ENCODE measurements at regions of chr19 and their contacts with region 1.

Region 1: DNA sequence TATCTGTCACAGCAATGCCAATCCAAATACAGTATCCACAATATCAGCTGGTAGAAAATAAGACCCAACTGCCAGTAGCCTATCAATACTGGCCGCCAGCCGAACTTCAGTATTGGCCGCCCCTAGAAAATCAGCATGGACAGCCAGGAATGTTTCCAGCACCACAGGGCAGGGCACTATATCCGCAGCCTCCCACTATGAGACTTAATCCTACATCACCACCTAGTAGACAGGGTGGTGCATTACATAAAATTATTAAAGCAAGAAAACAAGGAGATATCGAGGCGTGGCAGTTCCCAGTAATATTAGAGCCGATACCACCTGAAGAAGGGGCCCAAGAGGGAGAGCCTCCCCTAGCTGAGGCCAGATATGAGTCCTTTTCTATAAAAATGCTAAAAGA is 111.3 kb downstream of the ZNF486 start:
- DNase-seq: no peak
- H3K4me3 ChIP-seq: no peak overlapping the region
- H3K27ac ChIP-seq: no peak overlapping the region
- H3K4me1 ChIP-seq: peaks cover 0 to 7% (median 0%) of the 10 kb centered on the region in 4 donors
- H3K27me3 ChIP-seq: no peaks in the 10 kb centered on the region
- CTCF ChIP-seq: peak; percentile 49 to 71 (median 56)
- EP300 ChIP-seq: no peak
- POLR2A ChIP-seq: no peak

Region 2: GRCh38 chr19:19997656-19998268 is 280.6 kb before region 1 on chr19:
- intact Hi-C with region 1: loop called (anchors 10 kb)
- DNase-seq: no peak
- H3K4me3 ChIP-seq: no peak overlapping the region
- H3K27ac ChIP-seq: no peak overlapping the region
- H3K4me1 ChIP-seq: peaks cover 0 to 8% (median 2%) of the 10 kb centered on the region in 4 donors
- H3K27me3 ChIP-seq: no peaks in the 10 kb centered on the region
- CTCF ChIP-seq: peak; percentile 69 to 87 (median 75)
- EP300 ChIP-seq: no peak
- POLR2A ChIP-seq: no peak